H1 (cell line): ENCODE measurements at regions of chr4 and their contacts with region 1.

Region 1: DNA sequence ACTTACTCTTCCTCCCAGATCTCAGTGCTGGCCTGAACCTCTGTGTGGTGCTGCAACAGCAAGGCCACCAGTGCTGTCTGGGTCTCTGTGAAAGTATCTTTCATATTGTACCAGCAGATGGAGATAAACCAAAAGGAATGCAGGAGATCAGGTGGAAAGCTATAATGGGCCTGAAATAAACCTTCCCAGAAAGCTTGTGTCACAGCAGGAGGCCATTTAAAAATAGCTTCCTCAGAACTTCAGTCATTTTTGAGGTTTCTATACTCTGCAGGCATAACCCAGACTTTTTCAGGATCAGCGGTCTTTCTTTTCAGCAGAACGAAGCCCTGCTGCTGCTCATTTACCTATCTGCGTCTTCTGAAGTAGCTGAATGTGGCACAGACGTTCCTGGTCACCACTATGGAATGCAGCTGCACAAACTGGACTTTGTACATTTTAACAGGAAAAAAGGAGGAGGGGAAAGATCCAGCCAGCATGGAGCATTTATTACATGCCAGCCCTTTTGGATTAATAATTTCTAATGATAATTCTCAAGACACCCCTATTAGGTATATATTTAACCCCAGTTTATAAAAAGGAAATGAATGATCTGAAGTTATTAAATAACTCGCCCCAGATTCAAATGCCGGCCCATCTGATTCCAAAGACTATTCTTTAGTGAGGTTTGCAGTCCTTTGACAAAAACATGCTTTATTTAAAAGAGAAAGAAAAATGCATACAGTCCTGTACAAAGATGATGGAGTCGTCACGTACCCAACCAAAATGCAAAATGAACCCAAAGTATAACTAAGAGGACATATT is 119.7 kb downstream of the NFKB1 start:
- DNase-seq: no peak
- H3K4me3 ChIP-seq: no peak overlapping the region
- H3K27ac ChIP-seq: no peak overlapping the region
- H3K4me1 ChIP-seq: peaks cover 5 to 10% (median 6%) of the 10 kb centered on the region in 4 experiments; a peak in 6 of 7 replicates
- H3K27me3 ChIP-seq: no peaks in the 10 kb centered on the region
- CTCF ChIP-seq: peak in 2 of 3 experiments; percentile 33 to 34; a peak in 2 of 4 replicates
- EP300 ChIP-seq: no peak
- POLR2A ChIP-seq: no peak
- RAD21 ChIP-seq: peak; percentile 62 to 65

Region 2: DNA sequence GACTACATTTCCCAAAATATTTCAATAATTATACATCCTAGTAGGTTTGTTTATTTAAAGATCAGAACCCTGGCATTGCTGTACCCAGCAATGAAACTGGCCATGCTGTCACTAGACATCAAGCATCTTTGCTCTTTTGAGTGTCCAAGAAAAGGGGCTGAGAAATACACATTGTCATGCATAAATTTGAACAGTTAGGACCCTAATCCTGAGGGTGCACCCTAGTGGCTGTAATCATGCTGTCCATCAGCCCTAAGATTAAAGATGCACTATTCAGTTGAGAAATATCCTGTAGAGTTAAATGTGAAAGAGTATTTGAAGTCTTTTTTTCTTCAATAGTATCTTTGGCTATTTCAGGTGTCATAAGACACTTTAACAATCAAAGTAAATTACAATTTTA is 10.9 kb before region 1 on chr4:
- CTCF ChIA-PET with region 1: interaction called, 10 read pairs
- POLR2A ChIA-PET with region 1: no interaction called
- DNase-seq: no peak
- H3K4me3 ChIP-seq: no peak overlapping the region
- H3K27ac ChIP-seq: no peak overlapping the region
- H3K4me1 ChIP-seq: peaks cover 0 to 3% (median 0%) of the 10 kb centered on the region in 4 experiments; a peak in 2 of 7 replicates
- H3K27me3 ChIP-seq: no peaks in the 10 kb centered on the region
- CTCF ChIP-seq: peak in 1 of 3 experiments; percentile 19; a peak in 1 of 4 replicates
- EP300 ChIP-seq: no peak
- POLR2A ChIP-seq: no peak
- RAD21 ChIP-seq: no peak

Region 3: GRCh38 chr4:102809190-102809589 is 188.3 kb after region 1 on chr4:
- CTCF ChIA-PET with region 1: no interaction called
- POLR2A ChIA-PET with region 1: no interaction called
- DNase-seq: no peak
- H3K4me3 ChIP-seq: no peak overlapping the region
- H3K27ac ChIP-seq: no peak overlapping the region
- H3K4me1 ChIP-seq: peaks cover 0 to 3% (median 0%) of the 10 kb centered on the region in 4 experiments; a peak in 1 of 7 replicates
- H3K27me3 ChIP-seq: no peaks in the 10 kb centered on the region
- CTCF ChIP-seq: no peak
- EP300 ChIP-seq: no peak
- POLR2A ChIP-seq: no peak
- RAD21 ChIP-seq: no peak